ENCODE measurements at regions of chr13 and their contacts with region 1.

Region 1: GRCh38 chr13:106536244-106537034 is 977 bp upstream of the EFNB2 start:
- DNase-seq: peak; percentile 96
- H3K4me3 ChIP-seq: peak overlapping the region; percentile 85
- H3K27ac ChIP-seq: peak overlapping the region; percentile 75
- H3K4me1 ChIP-seq: no peaks in the 10 kb centered on the region
- H3K27me3 ChIP-seq: no peaks in the 10 kb centered on the region
- CTCF ChIP-seq: peak; percentile 96

Region 2: GRCh38 chr13:104571161-104571892 is 1965.1 kb before region 1 on chr13:
- intact Hi-C with region 1: loop called (anchors 5 kb)
- DNase-seq: peak; percentile 72
- H3K4me3 ChIP-seq: no peak overlapping the region
- H3K27ac ChIP-seq: no peak overlapping the region
- H3K4me1 ChIP-seq: no peaks in the 10 kb centered on the region
- H3K27me3 ChIP-seq: no peaks in the 10 kb centered on the region
- CTCF ChIP-seq: peak; percentile 57

Region 3: DNA sequence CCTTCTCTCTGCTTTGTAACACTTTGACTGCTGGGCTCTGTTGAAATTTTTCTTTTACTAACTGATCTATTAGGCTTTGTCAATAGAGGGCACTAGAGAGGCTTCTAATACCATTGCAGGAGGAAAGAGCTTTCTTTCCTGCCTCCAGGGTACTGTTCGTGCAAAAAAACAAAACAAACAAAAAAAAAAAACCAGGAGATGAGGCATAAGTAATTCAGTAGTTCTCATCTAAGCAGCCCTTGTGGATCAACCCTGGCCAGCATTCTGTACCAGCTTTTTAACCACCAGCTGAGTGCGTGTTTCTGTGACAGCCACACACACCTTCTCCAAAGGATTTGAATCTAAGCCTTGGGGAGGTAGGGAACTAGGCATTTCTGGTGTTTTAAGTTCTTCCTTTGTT is 1762.7 kb before region 1 on chr13:
- intact Hi-C with region 1: loop called (anchors 10 kb)
- DNase-seq: no peak
- H3K4me3 ChIP-seq: no peak overlapping the region
- H3K27ac ChIP-seq: no peak overlapping the region
- H3K4me1 ChIP-seq: no peaks in the 10 kb centered on the region
- H3K27me3 ChIP-seq: no peaks in the 10 kb centered on the region
- CTCF ChIP-seq: peak; percentile 35

Region 4: DNA sequence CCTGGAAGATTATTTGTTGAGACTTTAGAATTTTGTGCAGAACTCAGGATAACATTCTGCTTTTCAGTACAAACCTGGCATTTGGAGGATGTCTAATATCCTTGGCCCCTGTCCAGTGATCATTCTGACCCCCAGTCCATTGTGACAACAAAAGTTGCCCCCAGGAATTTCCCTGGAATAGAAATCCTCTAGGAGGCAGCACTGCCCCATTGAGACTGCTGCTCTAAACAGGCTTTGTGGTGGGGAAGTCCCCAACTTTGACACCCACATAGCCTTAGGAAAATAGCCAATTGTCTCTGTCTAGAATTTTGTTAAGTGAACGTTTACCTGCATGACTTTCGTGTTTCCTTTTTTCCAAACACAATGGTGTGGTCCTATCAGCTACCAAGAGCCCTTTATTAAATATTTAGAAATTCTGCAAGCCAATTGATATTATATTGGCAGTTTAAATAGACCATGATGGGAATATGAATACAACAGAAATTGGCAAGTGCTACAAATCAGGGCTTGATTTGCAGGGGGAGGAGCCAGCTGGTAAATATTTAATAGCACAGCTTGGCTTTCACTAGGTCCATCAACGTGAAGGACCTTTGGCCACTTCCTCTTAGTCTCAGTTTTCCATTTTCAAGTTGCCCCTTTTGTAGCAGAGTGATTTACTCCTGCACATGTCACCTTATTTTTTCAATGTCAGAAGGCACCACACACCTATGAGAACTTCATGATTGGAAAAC is 452.7 kb before region 1 on chr13:
- intact Hi-C with region 1: loop called (anchors 5 kb)
- DNase-seq: peak; percentile 63
- H3K4me3 ChIP-seq: no peak overlapping the region
- H3K27ac ChIP-seq: no peak overlapping the region
- H3K4me1 ChIP-seq: no peaks in the 10 kb centered on the region
- H3K27me3 ChIP-seq: no peaks in the 10 kb centered on the region
- CTCF ChIP-seq: peak; percentile 47

Region 5: DNA sequence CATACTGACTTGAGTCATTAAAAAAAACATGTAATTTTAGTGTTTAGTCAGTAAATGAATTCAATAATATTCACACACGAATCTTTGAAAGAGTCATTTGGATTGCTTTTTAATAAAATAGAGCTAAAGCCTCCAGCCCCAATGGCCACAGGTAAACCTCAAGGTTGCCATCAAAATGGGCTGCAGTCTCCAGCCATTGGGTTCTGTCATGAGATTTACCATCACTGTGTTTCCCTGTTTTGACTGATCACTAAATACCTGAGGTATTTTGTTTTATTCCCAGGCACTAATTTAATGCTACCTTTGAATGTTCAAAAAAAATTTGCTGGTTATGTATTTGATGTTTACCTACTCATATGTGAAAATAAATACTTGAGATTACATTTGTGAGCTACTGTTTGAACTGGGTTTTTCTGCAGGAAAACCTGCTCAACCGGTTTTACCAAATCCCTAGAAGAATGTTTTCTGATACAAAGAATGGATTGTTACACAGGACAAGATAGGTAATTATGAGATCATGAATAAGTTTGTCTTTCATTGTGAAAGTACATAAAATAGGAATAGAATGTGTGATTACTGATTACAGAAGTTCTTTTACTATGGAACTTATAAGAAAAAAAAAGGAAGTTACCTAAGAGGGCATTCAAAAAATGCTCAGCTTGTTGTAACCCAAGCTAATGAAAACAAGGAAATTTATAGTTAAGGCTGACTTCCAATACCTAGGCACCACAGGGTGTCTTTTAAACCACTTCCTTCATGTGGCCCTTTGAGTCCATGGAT is 392.3 kb before region 1 on chr13:
- intact Hi-C with region 1: loop called (anchors 10 kb)
- DNase-seq: peak; percentile 66
- H3K4me3 ChIP-seq: no peak overlapping the region
- H3K27ac ChIP-seq: peak overlapping the region; percentile 51
- H3K4me1 ChIP-seq: no peaks in the 10 kb centered on the region
- H3K27me3 ChIP-seq: no peaks in the 10 kb centered on the region
- CTCF ChIP-seq: no peak

Region 6: GRCh38 chr13:106619688-106620555 is 83.5 kb after region 1 on chr13:
- intact Hi-C with region 1: loop called (anchors 5 kb)
- DNase-seq: peak; percentile 46
- H3K4me3 ChIP-seq: no peak overlapping the region
- H3K27ac ChIP-seq: no peak overlapping the region
- H3K4me1 ChIP-seq: no peaks in the 10 kb centered on the region
- H3K27me3 ChIP-seq: peaks cover 6% of the 10 kb centered on the region
- CTCF ChIP-seq: peak; percentile 58

Region 7: GRCh38 chr13:106821699-106822378 is 285.4 kb after region 1 on chr13:
- intact Hi-C with region 1: no loop called
- DNase-seq: no peak
- H3K4me3 ChIP-seq: no peak overlapping the region
- H3K27ac ChIP-seq: no peak overlapping the region
- H3K4me1 ChIP-seq: no peaks in the 10 kb centered on the region
- H3K27me3 ChIP-seq: no peaks in the 10 kb centered on the region
- CTCF ChIP-seq: no peak

Region 8: DNA sequence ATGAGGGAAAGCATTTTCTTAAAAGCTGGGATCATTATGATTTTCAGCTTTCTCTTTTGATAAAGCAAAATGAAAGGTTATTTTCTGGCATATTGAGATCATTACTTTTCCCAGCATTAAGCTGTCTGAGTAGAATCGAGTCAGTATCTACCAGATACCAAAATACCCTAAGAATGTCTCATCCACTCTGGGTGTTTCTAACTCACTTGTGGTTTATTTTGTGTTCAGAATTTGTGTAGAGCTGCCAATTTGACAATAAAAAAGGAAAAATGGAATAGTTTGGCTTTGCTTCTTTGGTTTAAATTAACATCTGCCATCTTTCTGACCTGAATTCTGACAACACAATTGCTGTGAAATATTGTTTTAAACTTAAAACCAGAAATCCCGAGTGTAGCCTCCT is 470.2 kb after region 1 on chr13:
- intact Hi-C with region 1: no loop called
- DNase-seq: no peak
- H3K4me3 ChIP-seq: no peak overlapping the region
- H3K27ac ChIP-seq: no peak overlapping the region
- H3K4me1 ChIP-seq: no peaks in the 10 kb centered on the region
- H3K27me3 ChIP-seq: no peaks in the 10 kb centered on the region
- CTCF ChIP-seq: no peak

Measured in colonic mucosa (tissue), 4 donors.